MCF 10A (cell line): ENCODE measurements at regions of chr11 and their contacts with region 1.

Region 1: GRCh38 chr11:86938900-86939880 is 16.0 kb downstream of the FZD4 start:
- DNase-seq: peak; percentile 60
- H3K4me3 Mint-ChIP-seq: no peak overlapping the region
- H3K27ac Mint-ChIP-seq: no peak overlapping the region
- H3K4me1 Mint-ChIP-seq: peaks cover 8% of the 10 kb centered on the region
- H3K27me3 Mint-ChIP-seq: no peaks in the 10 kb centered on the region
- CTCF ChIP-seq: peak; percentile 54

Region 2: DNA sequence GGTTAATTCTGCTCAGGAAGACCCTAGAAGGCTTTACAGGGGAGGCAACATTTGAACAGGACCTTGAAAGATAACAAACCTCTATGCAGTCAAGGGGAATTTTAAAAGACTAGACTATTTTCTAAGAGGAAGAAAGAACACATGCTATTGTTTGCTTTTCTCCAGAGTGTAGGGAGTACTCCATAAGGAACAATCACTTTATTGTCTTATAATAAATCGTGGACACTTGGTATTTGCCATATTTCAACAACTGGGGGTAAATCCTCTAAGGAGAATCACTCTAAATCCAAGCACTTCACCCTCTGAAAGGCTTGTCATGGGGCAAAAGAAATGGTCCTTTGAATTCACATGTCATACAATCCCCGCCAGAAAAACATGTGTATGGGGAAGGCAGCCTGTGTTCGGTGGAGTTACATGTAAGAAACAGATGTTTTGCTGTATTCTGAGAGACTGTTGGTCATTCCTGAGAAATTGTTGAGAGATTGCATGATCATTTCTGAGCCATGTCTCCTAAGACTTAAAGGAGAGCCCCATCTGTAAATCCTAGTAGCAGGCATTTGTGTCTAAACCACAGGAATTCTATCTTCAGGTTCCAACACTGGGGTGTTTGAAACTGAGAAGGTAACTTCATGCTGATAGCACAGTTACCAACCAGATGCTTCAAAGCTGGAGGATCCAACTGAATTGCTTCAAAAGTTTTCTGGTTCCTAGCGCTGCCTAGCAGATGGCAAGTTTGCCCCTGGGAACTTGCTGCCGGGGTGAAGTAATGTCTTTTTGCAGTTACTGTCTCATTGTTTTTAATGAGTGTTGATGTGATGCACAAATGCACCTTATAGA is 50.8 kb before region 1 on chr11:
- CTCF ChIA-PET with region 1: no interaction called
- POLR2A ChIA-PET with region 1: no interaction called
- intact Hi-C with region 1: no loop called
- DNase-seq: no peak
- H3K4me3 Mint-ChIP-seq: no peak overlapping the region
- H3K27ac Mint-ChIP-seq: no peak overlapping the region
- H3K4me1 Mint-ChIP-seq: no peaks in the 10 kb centered on the region
- H3K27me3 Mint-ChIP-seq: no peaks in the 10 kb centered on the region
- CTCF ChIP-seq: no peak

Region 3: GRCh38 chr11:87300640-87301380 is 361.6 kb after region 1 on chr11:
- CTCF ChIA-PET with region 1: interaction called, 49 read pairs
- POLR2A ChIA-PET with region 1: no interaction called
- intact Hi-C with region 1: no loop called
- DNase-seq: no peak
- H3K4me3 Mint-ChIP-seq: no peak overlapping the region
- H3K27ac Mint-ChIP-seq: no peak overlapping the region
- H3K4me1 Mint-ChIP-seq: no peaks in the 10 kb centered on the region
- H3K27me3 Mint-ChIP-seq: no peaks in the 10 kb centered on the region
- CTCF ChIP-seq: no peak